Caco-2 (cell line): ENCODE measurements at regions of chr13 and their contacts with region 1.

Region 1: GRCh38 chr13:112689303-112690165 is at the start of gene ATP11A:
- DNase-seq: peak; percentile 94 to 96
- H3K4me3 ChIP-seq: peak within 1 kb of the TSS; percentile 78
- H3K4me3 Mint-ChIP-seq: peak within 1 kb of the TSS; percentile 91
- H3K27ac Mint-ChIP-seq: peak within 1 kb of the TSS; percentile 90
- H3K4me1 ChIP-seq: peaks cover 55% of the 10 kb centered on the region
- H3K4me1 Mint-ChIP-seq: peaks cover 33% of the 10 kb centered on the region
- H3K27me3 ChIP-seq: no peaks in the 10 kb centered on the region
- H3K27me3 Mint-ChIP-seq: no peaks in the 10 kb centered on the region
- CTCF ChIP-seq: no peak
- total RNA-seq, gene ATP11A: 222 and 232 TPM in 2 replicates

Region 2: DNA sequence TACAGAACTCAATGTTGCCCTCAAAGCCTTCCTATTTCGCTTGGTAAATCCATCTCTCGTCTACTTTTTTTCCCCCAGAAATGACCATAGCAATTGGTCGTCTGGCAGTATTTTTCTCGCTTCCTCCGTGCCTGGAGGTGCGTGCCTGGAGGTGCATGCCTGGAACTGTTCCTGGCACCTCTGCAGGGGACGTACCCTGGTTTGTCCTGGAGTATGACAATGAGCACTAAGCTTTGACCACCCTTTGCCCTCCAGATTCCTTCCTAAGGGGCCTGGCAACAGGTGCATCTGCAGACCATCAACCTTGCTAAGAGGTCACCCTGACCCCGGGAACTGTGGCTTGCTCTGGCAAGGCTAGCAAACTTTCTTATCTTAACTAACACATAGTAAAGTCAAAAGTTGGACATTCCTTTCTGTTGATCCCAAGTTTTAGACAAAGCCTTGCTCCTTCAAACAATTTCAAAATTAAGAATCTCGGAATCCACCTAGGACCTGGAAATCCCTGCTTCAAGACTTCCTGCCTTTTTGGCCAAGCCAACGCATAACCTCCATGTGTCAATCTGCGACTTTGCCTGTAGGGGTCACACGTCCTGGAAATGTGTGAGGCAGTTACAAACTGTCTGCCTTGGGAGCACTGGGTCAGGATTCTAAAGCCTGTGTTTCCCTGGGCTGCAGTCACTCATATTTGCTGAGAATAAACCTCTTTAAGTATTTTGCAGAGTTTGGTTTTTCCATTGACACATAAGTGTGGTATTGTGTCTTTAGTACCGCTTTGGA is 72.8 kb before region 1 on chr13:
- CTCF ChIA-PET with region 1: no interaction called
- POLR2A ChIA-PET with region 1: no interaction called
- intact Hi-C with region 1: loop called (anchors 5 kb)
- DNase-seq: peak in 1 of 2 experiments; percentile 49
- H3K4me3 ChIP-seq: no peak overlapping the region
- H3K4me3 Mint-ChIP-seq: no peak overlapping the region
- H3K27ac Mint-ChIP-seq: no peak overlapping the region
- H3K4me1 ChIP-seq: peaks cover 10% of the 10 kb centered on the region
- H3K4me1 Mint-ChIP-seq: peaks cover 6% of the 10 kb centered on the region
- H3K27me3 ChIP-seq: no peaks in the 10 kb centered on the region
- H3K27me3 Mint-ChIP-seq: peaks cover 5% of the 10 kb centered on the region
- CTCF ChIP-seq: peak; percentile 56 to 72

Region 3: GRCh38 chr13:112711528-112712265 is 22.2 kb after region 1 on chr13:
- CTCF ChIA-PET with region 1: no interaction called
- POLR2A ChIA-PET with region 1: no interaction called
- intact Hi-C with region 1: loop called (anchors 1 kb)
- DNase-seq: peak; percentile 88 to 94
- H3K4me3 ChIP-seq: peak overlapping the region; percentile 23
- H3K4me3 Mint-ChIP-seq: peak overlapping the region; percentile 73
- H3K27ac Mint-ChIP-seq: peak overlapping the region; percentile 89
- H3K4me1 ChIP-seq: peaks cover 70% of the 10 kb centered on the region
- H3K4me1 Mint-ChIP-seq: peaks cover 57% of the 10 kb centered on the region
- H3K27me3 ChIP-seq: no peaks in the 10 kb centered on the region
- H3K27me3 Mint-ChIP-seq: no peaks in the 10 kb centered on the region
- CTCF ChIP-seq: peak; percentile 36 to 69

Region 4: GRCh38 chr13:112722433-112723250 is 33.1 kb after region 1 on chr13:
- CTCF ChIA-PET with region 1: interaction called, 3 read pairs
- POLR2A ChIA-PET with region 1: no interaction called
- intact Hi-C with region 1: loop called (anchors 1 kb)
- DNase-seq: peak; percentile 91 to 94
- H3K4me3 ChIP-seq: no peak overlapping the region
- H3K4me3 Mint-ChIP-seq: peak overlapping the region; percentile 76
- H3K27ac Mint-ChIP-seq: peak overlapping the region; percentile 98
- H3K4me1 ChIP-seq: peaks cover 68% of the 10 kb centered on the region
- H3K4me1 Mint-ChIP-seq: peaks cover 69% of the 10 kb centered on the region
- H3K27me3 ChIP-seq: no peaks in the 10 kb centered on the region
- H3K27me3 Mint-ChIP-seq: no peaks in the 10 kb centered on the region
- CTCF ChIP-seq: no peak

Region 5: GRCh38 chr13:112873851-112874750 is 184.6 kb after region 1 on chr13:
- CTCF ChIA-PET with region 1: no interaction called
- POLR2A ChIA-PET with region 1: no interaction called
- intact Hi-C with region 1: loop called (anchors 10 kb)
- DNase-seq: peak; percentile 82 to 87
- H3K4me3 ChIP-seq: no peak overlapping the region
- H3K4me3 Mint-ChIP-seq: no peak overlapping the region
- H3K27ac Mint-ChIP-seq: peak overlapping the region; percentile 26
- H3K4me1 ChIP-seq: peaks cover 9% of the 10 kb centered on the region; the same call in 1 of the 2 replicates
- H3K4me1 Mint-ChIP-seq: peaks cover 15% of the 10 kb centered on the region
- H3K27me3 ChIP-seq: no peaks in the 10 kb centered on the region
- H3K27me3 Mint-ChIP-seq: no peaks in the 10 kb centered on the region
- CTCF ChIP-seq: peak; percentile 94 to 97